ENCODE measurements at regions of chr14 and their contacts with region 1.

Region 1: DNA sequence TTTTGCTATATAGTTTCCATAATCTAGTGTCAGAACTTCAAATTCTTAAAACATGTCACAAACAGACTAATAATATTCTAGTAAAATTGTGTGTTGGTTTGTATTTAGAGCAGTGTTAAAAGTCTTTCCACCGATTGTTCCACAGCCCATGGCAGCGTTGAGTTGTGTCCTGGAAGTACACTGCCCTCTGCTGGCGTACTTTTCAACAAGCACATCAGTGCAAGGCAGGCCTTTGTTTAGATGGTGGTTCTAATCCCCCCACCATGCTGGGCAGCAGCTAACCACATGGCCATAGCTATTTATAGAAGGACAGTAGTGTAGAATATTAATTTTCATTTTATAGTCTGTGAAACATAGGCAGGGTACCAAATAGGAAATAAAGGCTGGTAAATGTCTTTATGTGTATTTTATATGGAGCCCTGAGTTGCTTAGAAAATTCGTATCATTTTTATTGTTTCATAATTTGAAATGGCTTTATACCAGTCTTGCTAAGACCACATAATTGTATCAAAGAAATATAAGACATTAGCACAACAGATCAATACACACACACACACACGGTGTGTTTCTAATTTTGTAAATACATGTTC is 235.4 kb downstream of the SEC23A start:
- DNase-seq: peak; percentile 77 to 90 (median 88)
- H3K4me3 ChIP-seq: no peak overlapping the region
- H3K27ac ChIP-seq: no peak overlapping the region
- H3K4me1 ChIP-seq: peaks cover 0 to 7% (median 4%) of the 10 kb centered on the region in 4 experiments
- H3K27me3 ChIP-seq: no peaks in the 10 kb centered on the region

Region 2: DNA sequence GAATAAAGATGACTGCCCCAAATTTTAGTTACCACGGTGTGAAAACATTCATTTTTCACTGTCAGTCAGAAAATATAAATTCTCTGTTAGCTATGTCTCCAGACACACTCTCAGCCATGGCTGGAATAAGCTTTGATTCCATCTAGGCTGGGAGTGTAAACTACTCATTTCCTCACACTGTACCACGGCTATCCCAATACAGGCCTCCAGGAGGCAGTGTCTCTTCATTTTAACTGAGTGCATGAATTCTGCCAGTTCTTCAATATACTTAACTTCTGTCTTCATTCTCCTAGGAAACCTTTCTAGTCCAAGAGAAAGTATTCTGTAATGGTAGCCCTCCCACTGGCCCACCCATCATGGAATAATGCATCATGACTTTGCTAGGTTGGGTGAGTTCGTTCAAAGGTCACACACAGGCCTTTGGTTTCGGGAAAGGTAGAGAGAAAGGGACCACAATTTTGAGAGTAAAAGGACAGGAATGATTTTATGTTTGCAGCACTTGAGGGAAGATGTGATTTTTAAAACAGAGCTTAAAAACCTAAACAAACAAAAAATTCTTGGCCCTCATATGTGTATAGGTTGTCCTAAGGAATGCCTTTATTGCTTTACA is 145.7 kb before region 1 on chr14:
- CTCF ChIA-PET with region 1: interaction called, 135 read pairs
- POLR2A ChIA-PET with region 1: no interaction called
- DNase-seq: peak; percentile 33 to 72 (median 64)
- H3K4me3 ChIP-seq: no peak overlapping the region
- H3K27ac ChIP-seq: no peak overlapping the region
- H3K4me1 ChIP-seq: no peaks in the 10 kb centered on the region
- H3K27me3 ChIP-seq: no peaks in the 10 kb centered on the region

Region 3: GRCh38 chr14:38808734-38809462 is 58.8 kb before region 1 on chr14:
- CTCF ChIA-PET with region 1: no interaction called
- POLR2A ChIA-PET with region 1: no interaction called
- DNase-seq: no peak
- H3K4me3 ChIP-seq: no peak overlapping the region
- H3K27ac ChIP-seq: no peak overlapping the region
- H3K4me1 ChIP-seq: no peaks in the 10 kb centered on the region
- H3K27me3 ChIP-seq: no peaks in the 10 kb centered on the region

Region 4: DNA sequence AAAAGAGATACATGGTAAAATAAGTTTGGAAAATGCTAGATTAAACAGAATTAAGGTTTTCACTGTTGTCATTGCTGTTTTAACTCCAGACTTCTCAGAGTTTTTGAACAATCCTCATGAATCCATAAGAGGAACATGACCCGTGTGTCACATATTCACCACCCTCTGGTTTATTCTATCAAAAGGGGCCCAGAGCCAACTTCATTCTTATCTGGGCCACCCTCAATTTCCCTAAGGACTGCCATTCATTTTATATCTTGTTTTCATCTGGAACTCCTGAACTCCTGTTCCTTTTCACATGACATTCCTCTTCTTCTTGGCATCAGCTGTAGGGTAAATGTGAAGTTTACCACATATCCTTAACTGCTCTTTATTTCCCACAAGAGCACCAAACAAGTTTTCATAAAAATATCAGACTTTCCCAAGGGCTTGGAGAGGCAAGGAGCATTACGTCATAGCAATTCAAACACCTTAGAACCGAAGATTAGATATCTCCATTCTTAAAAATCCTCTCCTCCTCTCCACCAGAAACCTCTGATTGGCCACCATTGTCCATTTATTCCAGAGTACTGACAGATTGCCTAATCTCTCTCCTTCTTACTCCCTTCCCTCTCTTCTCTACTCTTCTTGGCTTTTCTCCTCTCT is 10.2 kb after region 1 on chr14:
- CTCF ChIA-PET with region 1: interaction called, 15 read pairs
- POLR2A ChIA-PET with region 1: no interaction called
- DNase-seq: no peak
- H3K4me3 ChIP-seq: no peak overlapping the region
- H3K27ac ChIP-seq: no peak overlapping the region
- H3K4me1 ChIP-seq: peaks cover 0 to 22% (median 4%) of the 10 kb centered on the region in 4 experiments
- H3K27me3 ChIP-seq: no peaks in the 10 kb centered on the region

Region 5: GRCh38 chr14:38958594-38958993 is 90.9 kb after region 1 on chr14:
- CTCF ChIA-PET with region 1: no interaction called
- POLR2A ChIA-PET with region 1: no interaction called
- DNase-seq: no peak
- H3K4me3 ChIP-seq: no peak overlapping the region
- H3K27ac ChIP-seq: no peak overlapping the region
- H3K4me1 ChIP-seq: no peaks in the 10 kb centered on the region
- H3K27me3 ChIP-seq: no peaks in the 10 kb centered on the region